ENCODE measurements at regions of chr12 and their contacts with region 1.

Region 1: DNA sequence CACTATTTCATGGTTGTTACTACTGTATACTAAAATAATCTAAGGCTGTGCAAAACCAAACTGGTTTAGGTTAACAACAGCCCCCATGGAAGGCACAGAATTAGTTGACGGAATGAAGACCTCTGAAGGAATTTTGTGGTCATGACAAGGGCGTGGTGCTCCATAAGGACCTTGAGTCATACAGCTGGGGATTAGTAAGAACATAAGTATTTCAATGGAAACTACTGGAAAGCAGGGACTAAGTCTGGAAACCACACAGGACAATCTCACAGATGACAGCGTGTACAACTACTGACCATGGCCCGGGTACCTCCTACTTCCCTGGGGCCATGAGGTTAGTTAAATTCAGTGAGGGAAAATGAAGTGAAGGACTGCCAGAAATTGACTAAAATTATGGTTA is 98.5 kb upstream of the PLEKHA5 start:
- DNase-seq: peak; percentile 94
- H3K4me3 ChIP-seq: peak overlapping the region in 2 of 3 experiments; percentile 17 to 25
- H3K27ac ChIP-seq: peak overlapping the region; percentile 99
- H3K4me1 ChIP-seq: peaks cover 23% of the 10 kb centered on the region
- H3K27me3 ChIP-seq: no peaks in the 10 kb centered on the region
- CTCF ChIP-seq: no peak

Region 2: GRCh38 chr12:18872770-18873169 is 158.3 kb before region 1 on chr12:
- CTCF ChIA-PET with region 1: no interaction called
- dilution Hi-C with region 1: no loop called
- in situ Hi-C with region 1: no loop called
- intact Hi-C with region 1: loop called (anchors 5 kb)
- DNase-seq: no peak
- H3K4me3 ChIP-seq: no peak overlapping the region
- H3K27ac ChIP-seq: no peak overlapping the region
- H3K4me1 ChIP-seq: peaks cover 5% of the 10 kb centered on the region
- H3K27me3 ChIP-seq: no peaks in the 10 kb centered on the region
- CTCF ChIP-seq: no peak

Region 3: GRCh38 chr12:18919871-18920511 is 111.0 kb before region 1 on chr12:
- CTCF ChIA-PET with region 1: no interaction called
- dilution Hi-C with region 1: no loop called
- in situ Hi-C with region 1: no loop called
- intact Hi-C with region 1: no loop called
- DNase-seq: no peak
- H3K4me3 ChIP-seq: no peak overlapping the region
- H3K27ac ChIP-seq: no peak overlapping the region
- H3K4me1 ChIP-seq: no peaks in the 10 kb centered on the region
- H3K27me3 ChIP-seq: no peaks in the 10 kb centered on the region
- CTCF ChIP-seq: no peak

Region 4: GRCh38 chr12:18998343-18999261 is 32.4 kb before region 1 on chr12:
- CTCF ChIA-PET with region 1: no interaction called
- dilution Hi-C with region 1: no loop called
- in situ Hi-C with region 1: no loop called
- intact Hi-C with region 1: loop called (anchors 1 kb)
- DNase-seq: peak; percentile 86
- H3K4me3 ChIP-seq: peak overlapping the region in 2 of 3 experiments; percentile 16 to 50
- H3K27ac ChIP-seq: peak overlapping the region; percentile 99
- H3K4me1 ChIP-seq: peaks cover 29% of the 10 kb centered on the region
- H3K27me3 ChIP-seq: no peaks in the 10 kb centered on the region
- CTCF ChIP-seq: no peak

Region 5: DNA sequence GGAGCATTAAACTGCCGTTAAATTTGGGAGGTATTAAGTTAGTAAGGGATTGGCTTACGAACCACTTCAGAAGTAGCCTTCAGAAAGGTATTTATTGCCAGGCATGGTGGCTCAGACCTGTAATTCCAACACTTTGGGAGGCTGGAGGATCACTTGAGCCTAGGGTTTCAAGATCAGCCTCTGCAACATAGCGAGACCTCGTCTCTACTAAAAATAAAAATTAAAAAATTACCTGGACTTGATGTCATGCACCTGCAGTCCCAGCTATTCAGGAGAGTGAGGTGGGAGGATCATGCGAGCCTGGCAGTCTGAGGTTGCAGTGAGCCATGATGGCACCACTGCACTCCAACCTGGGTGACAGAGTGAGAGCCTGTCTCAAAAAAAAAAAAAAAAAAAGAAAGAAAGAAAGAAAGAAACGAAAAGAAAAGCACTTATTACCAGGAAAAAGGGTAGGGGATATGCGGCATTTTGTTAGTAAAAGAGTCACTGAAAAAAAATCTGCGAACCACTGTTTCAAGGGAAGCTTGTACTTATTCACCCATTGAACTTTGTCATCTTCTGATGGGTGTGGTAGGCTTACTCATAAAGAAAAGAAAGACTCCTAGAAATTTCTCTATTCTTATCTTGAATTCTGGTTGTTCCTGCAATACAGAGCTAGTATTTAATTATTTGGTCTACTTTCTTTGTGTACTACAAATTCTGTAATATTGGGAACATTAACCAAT is 64.9 kb after region 1 on chr12:
- CTCF ChIA-PET with region 1: no interaction called
- dilution Hi-C with region 1: no loop called
- in situ Hi-C with region 1: no loop called
- intact Hi-C with region 1: loop called (anchors 2 kb)
- DNase-seq: peak; percentile 69
- H3K4me3 ChIP-seq: no peak overlapping the region
- H3K27ac ChIP-seq: peak overlapping the region; percentile 90
- H3K4me1 ChIP-seq: peaks cover 9% of the 10 kb centered on the region
- H3K27me3 ChIP-seq: no peaks in the 10 kb centered on the region
- CTCF ChIP-seq: no peak

Region 6: DNA sequence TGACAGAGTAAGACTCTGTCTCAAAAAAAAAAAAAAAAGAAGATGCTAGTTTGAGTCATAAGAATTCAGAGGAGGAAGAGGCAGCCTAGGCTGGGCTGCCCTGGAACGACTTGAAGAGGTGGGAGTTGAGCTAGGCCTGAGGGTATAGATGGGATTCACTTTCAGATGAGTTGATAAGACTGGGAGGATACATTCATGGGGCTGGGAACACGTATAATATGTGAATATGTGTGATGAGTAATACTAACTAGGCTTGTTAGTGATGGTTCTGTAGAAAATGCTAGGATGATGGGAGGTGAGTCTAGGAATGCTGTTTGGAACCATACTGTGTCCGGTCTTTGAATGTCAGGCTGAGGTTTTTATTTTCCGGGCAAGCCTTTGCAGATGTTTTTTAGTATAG is 107.5 kb after region 1 on chr12:
- CTCF ChIA-PET with region 1: no interaction called
- dilution Hi-C with region 1: loop called (anchors 5 kb)
- in situ Hi-C with region 1: no loop called
- intact Hi-C with region 1: no loop called
- DNase-seq: peak; percentile 83
- H3K4me3 ChIP-seq: no peak overlapping the region
- H3K27ac ChIP-seq: no peak overlapping the region
- H3K4me1 ChIP-seq: peaks cover 24% of the 10 kb centered on the region
- H3K27me3 ChIP-seq: no peaks in the 10 kb centered on the region
- CTCF ChIP-seq: no peak